HEK293 (cell line): ENCODE measurements at regions of chr6 and their contacts with region 1.

Region 1: GRCh38 chr6:41920921-41921711 is at the starts of genes BYSL and MED20:
- H3K4me3 ChIP-seq: peak within 1 kb of the TSS; percentile 88
- H3K27ac ChIP-seq: peak within 1 kb of the TSS; percentile 80
- H3K4me1 ChIP-seq: peaks cover 9% of the 10 kb centered on the region
- CTCF ChIP-seq: peak; percentile 97

Region 2: GRCh38 chr6:41846666-41847237 is 74.4 kb before region 1 on chr6:
- CTCF ChIA-PET with region 1: interaction called, 26 read pairs
- POLR2A ChIA-PET with region 1: interaction called, 13 read pairs
- H3K4me3 ChIP-seq: no peak overlapping the region
- H3K27ac ChIP-seq: peak overlapping the region; percentile 32
- H3K4me1 ChIP-seq: no peaks in the 10 kb centered on the region
- CTCF ChIP-seq: peak; percentile 62

Region 3: GRCh38 chr6:41887331-41887751 is 33.8 kb before region 1 on chr6:
- CTCF ChIA-PET with region 1: interaction called, 11 read pairs
- POLR2A ChIA-PET with region 1: interaction called, 6 read pairs
- H3K4me3 ChIP-seq: no peak overlapping the region
- H3K27ac ChIP-seq: no peak overlapping the region
- H3K4me1 ChIP-seq: no peaks in the 10 kb centered on the region
- CTCF ChIP-seq: no peak

Region 4: DNA sequence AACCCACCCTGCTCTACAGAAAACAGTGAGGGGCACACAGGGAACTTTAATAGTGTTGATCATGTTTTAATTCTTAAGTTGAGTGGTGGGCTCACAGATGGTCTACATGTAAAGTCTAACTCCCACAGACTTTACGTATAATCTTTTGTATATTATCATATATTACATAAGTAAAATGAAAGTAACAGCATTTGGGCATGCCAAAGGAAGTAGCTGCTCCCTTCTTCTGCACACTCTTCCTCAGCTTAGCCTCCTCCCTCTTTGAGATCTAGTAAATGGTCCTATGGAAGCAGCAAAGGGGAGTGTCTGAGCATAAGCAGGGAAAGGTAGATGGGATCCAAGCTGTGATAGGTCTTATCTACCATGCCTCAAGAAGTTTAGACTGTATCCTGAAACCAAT is 11.4 kb before region 1 on chr6:
- CTCF ChIA-PET with region 1: interaction called, 15 read pairs
- POLR2A ChIA-PET with region 1: no interaction called
- H3K4me3 ChIP-seq: no peak overlapping the region
- H3K27ac ChIP-seq: no peak overlapping the region
- H3K4me1 ChIP-seq: no peaks in the 10 kb centered on the region
- CTCF ChIP-seq: no peak

Region 5: DNA sequence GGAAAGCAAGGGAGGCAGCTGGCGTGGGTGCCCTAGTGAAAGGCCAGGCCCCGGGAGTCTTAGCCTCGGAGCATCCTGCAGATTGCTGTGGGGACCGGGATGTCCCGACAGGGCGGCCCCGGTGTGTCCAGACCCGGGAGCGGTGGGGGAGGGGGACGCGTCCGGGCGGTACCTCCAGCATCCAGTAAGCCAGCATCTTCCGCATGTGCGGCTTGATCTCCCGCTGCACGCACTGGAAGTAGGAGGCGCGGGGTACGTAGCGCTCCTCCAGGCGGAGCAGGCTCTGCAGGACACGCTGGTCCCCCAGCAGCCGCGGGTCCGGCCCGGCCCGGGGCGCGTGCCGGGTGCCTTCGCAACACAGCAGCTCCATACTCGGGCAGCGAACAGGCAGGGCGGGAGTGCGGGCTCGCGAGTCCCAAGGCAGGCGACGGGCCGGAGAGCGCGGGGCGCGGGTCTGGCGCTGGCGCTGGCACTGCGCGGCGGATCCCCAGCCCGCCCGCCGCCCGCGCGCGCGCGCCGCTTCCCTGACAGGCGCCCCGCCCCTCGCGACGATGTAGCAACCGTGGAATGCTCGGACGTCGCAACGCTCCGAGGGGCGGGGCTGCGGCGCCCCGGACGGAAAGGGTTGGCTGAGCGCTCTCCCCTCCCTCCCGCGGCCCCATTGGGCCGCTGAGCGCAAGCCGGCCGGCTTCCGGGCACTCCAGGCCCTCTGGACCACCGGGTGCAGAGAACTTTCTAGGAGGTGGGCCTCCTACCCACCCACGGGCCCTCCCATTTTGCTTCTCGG is 20.4 kb after region 1 on chr6 and contains the start of gene CCND3:
- CTCF ChIA-PET with region 1: interaction called, 160 read pairs
- POLR2A ChIA-PET with region 1: interaction called, 20 read pairs
- H3K4me3 ChIP-seq: peak within 1 kb of the TSS; percentile 83
- H3K27ac ChIP-seq: peak within 1 kb of the TSS; percentile 51; the same call in 1 of the 2 replicates
- H3K4me1 ChIP-seq: peaks cover 20% of the 10 kb centered on the region
- CTCF ChIP-seq: no peak

Region 6: GRCh38 chr6:42050266-42051032 is 129.3 kb after region 1 on chr6 and contains the start of gene TAF8:
- CTCF ChIA-PET with region 1: interaction called, 43 read pairs
- POLR2A ChIA-PET with region 1: interaction called, 6 read pairs
- H3K4me3 ChIP-seq: peak within 1 kb of the TSS; percentile 98
- H3K27ac ChIP-seq: peak within 1 kb of the TSS; percentile 86
- H3K4me1 ChIP-seq: peaks cover 14% of the 10 kb centered on the region
- CTCF ChIP-seq: peak; percentile 50; the same call in 1 of the 2 replicates